ENCODE measurements at regions of chr12 and their contacts with region 1.

Region 1: DNA sequence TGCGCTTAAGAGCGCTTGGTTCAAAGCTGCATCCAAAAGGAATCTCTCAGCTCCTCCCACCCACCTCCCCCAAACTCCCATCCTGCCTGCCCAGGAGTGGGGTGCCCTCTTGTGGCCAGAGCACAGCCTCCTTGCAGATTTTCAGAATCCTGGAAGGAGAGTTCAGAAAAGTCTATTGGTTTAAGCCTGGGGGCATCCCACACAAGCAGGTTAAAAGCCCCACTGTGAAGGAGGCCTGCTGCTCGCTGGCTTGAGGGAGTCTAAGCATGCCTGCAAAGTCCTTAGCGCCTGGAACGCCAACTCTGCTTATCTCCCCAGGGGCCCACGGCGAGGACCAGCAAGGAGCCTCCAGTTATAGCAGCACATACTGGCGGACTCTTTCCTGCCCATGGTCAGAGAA is 297.1 kb downstream of the KSR2 start:
- DNase-seq: peak; percentile 55 to 79 (median 72)
- ATAC-seq: peak; percentile 75
- H3K4me3 ChIP-seq: no peak overlapping the region
- H3K27ac ChIP-seq: no peak overlapping the region
- H3K4me1 ChIP-seq: no peaks in the 10 kb centered on the region
- H3K27me3 ChIP-seq: peaks cover 0 to 5% of the 10 kb centered on the region in 2 experiments; a peak in 1 of 5 replicates
- CTCF ChIP-seq: peak; percentile 70 to 79 (median 75)
- EP300 ChIP-seq: no peak
- POLR2A ChIP-seq: no peak
- RAD21 ChIP-seq: peak in 1 of 2 experiments; percentile 41; a peak in 2 of 4 replicates

Region 2: GRCh38 chr12:117236456-117237001 is 435.2 kb before region 1 on chr12:
- CTCF ChIA-PET with region 1: no interaction called
- POLR2A ChIA-PET with region 1: no interaction called
- in situ Hi-C with region 1: loop called (anchors 10 kb)
- intact Hi-C with region 1: no loop called
- DNase-seq: peak; percentile 65 to 82 (median 75)
- ATAC-seq: peak; percentile 95
- H3K4me3 ChIP-seq: no peak overlapping the region
- H3K27ac ChIP-seq: no peak overlapping the region
- H3K4me1 ChIP-seq: 0 out of 5 replicates have a peak, but pooled peaks cover 0 to 3% of the 10 kb centered on the region in 2 experiments
- H3K27me3 ChIP-seq: peaks cover 10 to 27% of the 10 kb centered on the region in 2 experiments; a peak in 3 of 5 replicates
- CTCF ChIP-seq: peak; percentile 72 to 85 (median 85)
- EP300 ChIP-seq: no peak
- POLR2A ChIP-seq: no peak
- RAD21 ChIP-seq: peak; percentile 30 to 65; a peak in 3 of 4 replicates

Measured in K562 (cell line).